A673 (cell line): ENCODE measurements at regions of chr4 and their contacts with region 1.

Region 1: DNA sequence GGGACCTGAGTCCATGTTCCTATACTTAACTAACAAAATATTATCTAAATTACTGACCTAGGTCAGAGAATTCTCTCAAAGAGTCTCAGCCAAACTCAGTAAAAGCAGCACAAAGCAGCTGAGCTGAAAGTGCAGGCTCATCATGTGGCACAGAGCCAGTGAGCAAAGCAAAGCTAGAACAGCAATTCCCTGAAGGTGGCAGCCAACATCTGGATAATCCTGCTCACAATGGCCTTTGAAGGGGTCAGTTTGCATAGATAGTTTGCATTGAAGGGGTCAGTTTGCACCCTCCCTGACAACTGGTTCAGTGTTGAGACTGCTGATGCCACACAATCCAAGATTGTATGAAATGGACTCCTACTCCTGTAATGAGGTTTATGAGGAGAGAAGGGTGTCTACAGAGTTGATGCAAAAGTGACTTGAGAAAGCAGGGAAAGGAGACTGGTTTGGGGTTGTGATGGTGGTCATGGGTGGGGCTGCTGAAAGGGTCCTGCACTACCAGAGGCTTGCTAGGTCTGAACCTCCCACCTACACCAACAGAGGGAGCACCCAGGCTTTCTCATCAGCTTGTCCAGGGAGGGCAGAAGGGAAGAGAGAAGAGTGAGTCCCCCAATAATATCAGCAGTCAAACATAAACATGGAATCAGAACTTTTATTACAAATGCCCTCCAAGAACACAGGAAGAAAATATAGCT is 39.7 kb downstream of the TRIM61 start:
- DNase-seq: peak; percentile 58
- H3K4me3 ChIP-seq: no peak overlapping the region
- H3K27ac ChIP-seq: no peak overlapping the region
- H3K4me1 ChIP-seq: peaks cover 4% of the 10 kb centered on the region
- H3K27me3 ChIP-seq: no peaks in the 10 kb centered on the region
- CTCF ChIP-seq: peak; percentile 36

Region 2: GRCh38 chr4:164606478-164606877 is 331.2 kb before region 1 on chr4:
- CTCF ChIA-PET with region 1: no interaction called
- POLR2A ChIA-PET with region 1: no interaction called
- intact Hi-C with region 1: no loop called
- DNase-seq: no peak
- H3K4me3 ChIP-seq: no peak overlapping the region
- H3K27ac ChIP-seq: no peak overlapping the region
- H3K4me1 ChIP-seq: no peaks in the 10 kb centered on the region
- H3K27me3 ChIP-seq: no peaks in the 10 kb centered on the region
- CTCF ChIP-seq: no peak

Region 3: GRCh38 chr4:164856396-164856795 is 81.3 kb before region 1 on chr4:
- CTCF ChIA-PET with region 1: interaction called, 10 read pairs
- POLR2A ChIA-PET with region 1: no interaction called
- intact Hi-C with region 1: no loop called
- DNase-seq: no peak
- H3K4me3 ChIP-seq: no peak overlapping the region
- H3K27ac ChIP-seq: no peak overlapping the region
- H3K4me1 ChIP-seq: no peaks in the 10 kb centered on the region
- H3K27me3 ChIP-seq: no peaks in the 10 kb centered on the region
- CTCF ChIP-seq: no peak

Region 4: DNA sequence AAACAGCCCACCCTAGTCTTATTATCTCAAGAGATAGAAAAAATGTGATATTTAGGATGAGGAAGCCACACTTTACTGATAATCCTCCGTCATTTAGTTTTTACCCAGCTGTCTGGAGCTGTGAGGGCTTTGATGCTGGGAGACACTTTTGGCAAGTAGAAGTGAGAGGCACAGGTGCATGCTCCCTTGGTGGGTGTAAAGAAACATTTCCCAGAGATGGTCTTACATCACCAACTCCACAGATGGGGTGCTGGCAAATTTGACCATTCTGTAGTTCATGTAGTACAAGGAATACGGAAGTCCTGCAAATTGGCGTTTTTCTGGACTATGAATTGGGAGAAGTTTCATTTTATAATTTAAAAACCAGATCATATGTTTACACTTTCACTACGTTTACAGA is 11.3 kb after region 1 on chr4:
- CTCF ChIA-PET with region 1: interaction called, 3 read pairs
- POLR2A ChIA-PET with region 1: no interaction called
- intact Hi-C with region 1: loop called (anchors 1 kb)
- DNase-seq: no peak
- H3K4me3 ChIP-seq: no peak overlapping the region
- H3K27ac ChIP-seq: no peak overlapping the region
- H3K4me1 ChIP-seq: no peaks in the 10 kb centered on the region
- H3K27me3 ChIP-seq: no peaks in the 10 kb centered on the region
- CTCF ChIP-seq: no peak